SK-N-SH (cell line): ENCODE measurements at regions of chr10 and their contacts with region 1.

Region 1: GRCh38 chr10:71708301-71708703 is 11.3 kb downstream of the C10orf105 start:
- DNase-seq: peak; percentile 90
- H3K4me3 ChIP-seq: peak overlapping the region in 1 of 2 experiments; percentile 51; a peak in 1 of 4 replicates
- H3K27ac ChIP-seq: no peak overlapping the region
- H3K4me1 ChIP-seq: peaks cover 0 to 13% of the 10 kb centered on the region in 2 experiments; a peak in 1 of 4 replicates
- H3K27me3 ChIP-seq: peaks cover 3% of the 10 kb centered on the region; the same call in 1 of the 2 replicates
- CTCF ChIP-seq: peak; percentile 77
- EP300 ChIP-seq: no peak
- RAD21 ChIP-seq: peak; percentile 90

Region 2: GRCh38 chr10:71378336-71379117 is 329.8 kb before region 1 on chr10:
- CTCF ChIA-PET with region 1: interaction called, 31 read pairs
- POLR2A ChIA-PET with region 1: no interaction called
- DNase-seq: no peak
- H3K4me3 ChIP-seq: no peak overlapping the region
- H3K27ac ChIP-seq: no peak overlapping the region
- H3K4me1 ChIP-seq: peaks cover 0 to 3% of the 10 kb centered on the region in 2 experiments; a peak in 1 of 4 replicates
- H3K27me3 ChIP-seq: no peaks in the 10 kb centered on the region
- CTCF ChIP-seq: no peak
- EP300 ChIP-seq: no peak
- RAD21 ChIP-seq: no peak

Region 3: DNA sequence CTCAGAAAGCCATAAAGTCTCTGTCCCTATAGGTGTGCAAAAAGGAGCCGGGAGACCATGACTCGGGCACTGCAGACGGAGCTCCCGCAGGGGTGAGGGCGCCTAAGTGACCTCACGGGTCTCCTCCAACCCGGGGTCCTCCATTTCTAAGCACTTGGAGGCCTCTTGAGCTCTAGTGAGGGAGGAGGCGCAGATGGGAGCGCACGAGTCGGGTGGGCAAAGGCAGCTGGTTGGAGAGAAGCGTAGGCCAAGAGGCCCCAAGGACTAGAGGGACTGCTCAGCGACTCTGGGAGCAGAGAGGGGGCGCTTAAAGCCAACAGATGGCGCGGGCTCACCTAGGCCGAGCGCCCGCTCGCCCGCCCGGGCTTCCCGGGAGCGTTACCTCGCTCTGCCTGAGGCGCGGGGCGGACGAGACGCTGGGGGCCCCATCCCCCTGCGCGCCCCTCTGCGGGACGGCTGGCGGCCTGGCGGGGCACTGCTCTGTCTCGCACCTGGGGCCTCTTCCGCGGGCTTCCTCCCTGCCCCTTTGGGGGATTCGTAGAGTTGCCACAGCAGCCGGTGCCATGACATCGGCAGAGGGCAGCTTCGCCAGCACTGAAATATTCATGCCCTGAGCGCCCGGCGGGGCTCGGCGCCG is 312.1 kb before region 1 on chr10:
- CTCF ChIA-PET with region 1: interaction called, 44 read pairs
- POLR2A ChIA-PET with region 1: no interaction called
- DNase-seq: peak; percentile 90
- H3K4me3 ChIP-seq: peak overlapping the region in 1 of 2 experiments; percentile 41; a peak in 2 of 4 replicates
- H3K27ac ChIP-seq: no peak overlapping the region
- H3K4me1 ChIP-seq: peaks cover 0 to 9% of the 10 kb centered on the region in 2 experiments; a peak in 1 of 4 replicates
- H3K27me3 ChIP-seq: peaks cover 48% of the 10 kb centered on the region
- CTCF ChIP-seq: no peak
- EP300 ChIP-seq: no peak
- RAD21 ChIP-seq: peak; percentile 83

Region 4: DNA sequence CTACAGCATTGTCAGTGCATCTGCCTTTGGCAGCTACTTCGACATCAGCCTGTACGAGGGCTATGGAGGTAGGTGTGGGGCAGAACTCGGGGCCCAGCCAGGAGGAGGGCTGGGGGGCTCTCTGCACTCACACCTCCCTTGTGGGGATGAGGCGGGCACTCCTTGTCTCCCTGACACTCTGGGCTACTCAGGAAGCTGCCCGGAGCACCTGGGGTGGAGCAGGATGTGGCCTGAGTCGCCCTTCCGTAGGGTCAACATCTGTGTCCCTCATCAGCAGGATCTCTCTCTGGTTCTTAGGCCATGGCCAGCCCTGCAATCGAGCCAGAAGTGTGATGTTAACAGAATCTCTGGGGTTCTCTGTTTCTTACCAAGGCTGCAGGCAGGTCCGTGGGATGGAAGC is 28.9 kb before region 1 on chr10:
- CTCF ChIA-PET with region 1: interaction called, 10 read pairs
- POLR2A ChIA-PET with region 1: no interaction called
- DNase-seq: no peak
- H3K4me3 ChIP-seq: no peak overlapping the region
- H3K27ac ChIP-seq: no peak overlapping the region
- H3K4me1 ChIP-seq: no peaks in the 10 kb centered on the region
- H3K27me3 ChIP-seq: peaks cover 33% of the 10 kb centered on the region
- CTCF ChIP-seq: no peak
- EP300 ChIP-seq: no peak
- RAD21 ChIP-seq: no peak

Region 5: DNA sequence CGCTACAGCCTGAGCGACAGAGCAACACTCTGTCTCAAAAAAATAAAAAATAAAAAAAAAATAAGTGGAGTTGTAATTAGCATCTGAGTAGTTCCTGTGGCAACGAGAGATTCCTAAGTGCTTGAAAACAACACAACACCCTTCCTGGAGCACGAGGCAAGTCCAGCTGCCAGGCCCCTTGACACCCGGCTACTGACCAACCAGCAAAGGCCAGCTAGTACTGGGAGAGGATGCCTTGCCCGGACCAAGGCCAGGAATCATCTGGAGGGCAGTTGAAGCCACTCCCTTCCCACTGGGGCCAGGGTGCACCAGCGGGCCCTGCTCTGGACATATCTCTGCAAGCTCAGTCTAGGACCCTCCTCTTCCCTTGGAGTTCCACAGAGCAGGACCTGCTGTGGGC is 10.7 kb after region 1 on chr10:
- CTCF ChIA-PET with region 1: interaction called, 21 read pairs
- POLR2A ChIA-PET with region 1: no interaction called
- DNase-seq: no peak
- H3K4me3 ChIP-seq: no peak overlapping the region
- H3K27ac ChIP-seq: no peak overlapping the region
- H3K4me1 ChIP-seq: peaks cover 0 to 31% of the 10 kb centered on the region in 2 experiments; a peak in 1 of 4 replicates
- H3K27me3 ChIP-seq: 0 out of 2 replicates have a peak, but pooled peaks cover 4% of the 10 kb centered on the region
- CTCF ChIP-seq: no peak
- EP300 ChIP-seq: no peak
- RAD21 ChIP-seq: no peak

Region 6: GRCh38 chr10:71751515-71752224 is 43.4 kb after region 1 on chr10:
- CTCF ChIA-PET with region 1: no interaction called
- POLR2A ChIA-PET with region 1: no interaction called
- DNase-seq: no peak
- H3K4me3 ChIP-seq: no peak overlapping the region
- H3K27ac ChIP-seq: no peak overlapping the region
- H3K4me1 ChIP-seq: peaks cover 0 to 25% of the 10 kb centered on the region in 2 experiments; a peak in 1 of 4 replicates
- H3K27me3 ChIP-seq: no peaks in the 10 kb centered on the region
- CTCF ChIP-seq: no peak
- EP300 ChIP-seq: no peak
- RAD21 ChIP-seq: no peak

Region 7: DNA sequence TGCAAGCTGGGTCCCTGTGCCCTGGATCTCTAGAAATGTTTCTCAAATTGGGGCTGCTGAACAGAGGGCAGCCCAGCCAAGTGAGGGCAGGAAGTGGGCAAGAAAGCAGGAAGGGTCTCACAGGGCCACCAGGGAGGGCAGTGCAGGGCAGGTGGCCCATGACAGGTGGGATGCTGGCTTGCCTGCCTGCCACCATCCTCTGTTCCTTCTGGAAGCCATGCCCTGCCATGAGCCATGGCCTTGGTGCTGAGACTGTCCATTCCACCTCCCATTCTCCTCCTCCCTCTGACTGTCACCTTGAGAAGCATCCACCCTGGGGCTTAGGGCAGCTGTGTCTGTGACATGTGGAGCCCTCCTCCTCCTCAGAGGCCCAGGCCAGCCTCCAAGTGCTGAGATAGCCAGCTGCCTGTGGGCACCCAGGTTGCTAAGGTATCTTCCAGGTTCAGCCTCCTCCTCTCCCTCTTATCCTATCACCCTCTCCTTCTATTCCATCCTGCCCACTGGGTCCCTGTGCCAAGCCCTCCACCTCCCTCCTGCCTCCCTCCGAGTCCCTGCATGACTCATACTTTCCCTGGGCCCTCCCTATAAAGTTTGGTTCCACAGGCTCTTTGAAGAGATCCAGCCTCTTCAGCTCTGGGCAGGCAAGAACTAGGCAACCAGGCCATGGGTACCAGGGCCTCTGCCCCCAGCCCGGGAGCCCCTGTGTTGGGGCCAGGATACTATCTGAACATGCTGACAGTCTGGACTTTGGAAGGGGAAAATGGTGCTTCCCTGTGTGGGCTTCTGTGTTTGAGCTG is 63.7 kb after region 1 on chr10:
- CTCF ChIA-PET with region 1: interaction called, 26 read pairs
- POLR2A ChIA-PET with region 1: no interaction called
- DNase-seq: no peak
- H3K4me3 ChIP-seq: peak overlapping the region in 1 of 2 experiments; percentile 68; a peak in 1 of 4 replicates
- H3K27ac ChIP-seq: no peak overlapping the region; a peak in 1 of 4 replicates
- H3K4me1 ChIP-seq: peaks cover 22 to 26% of the 10 kb centered on the region in 2 experiments; a peak in 3 of 4 replicates
- H3K27me3 ChIP-seq: no peaks in the 10 kb centered on the region
- CTCF ChIP-seq: no peak
- EP300 ChIP-seq: no peak
- RAD21 ChIP-seq: no peak

Region 8: GRCh38 chr10:72649291-72649690 is 941.0 kb after region 1 on chr10:
- CTCF ChIA-PET with region 1: no interaction called
- POLR2A ChIA-PET with region 1: no interaction called
- DNase-seq: no peak
- H3K4me3 ChIP-seq: no peak overlapping the region
- H3K27ac ChIP-seq: no peak overlapping the region
- H3K4me1 ChIP-seq: no peaks in the 10 kb centered on the region
- H3K27me3 ChIP-seq: no peaks in the 10 kb centered on the region
- CTCF ChIP-seq: no peak
- EP300 ChIP-seq: no peak
- RAD21 ChIP-seq: no peak